ENCODE measurements at regions of chr14 and their contacts with region 1.

Region 1: DNA sequence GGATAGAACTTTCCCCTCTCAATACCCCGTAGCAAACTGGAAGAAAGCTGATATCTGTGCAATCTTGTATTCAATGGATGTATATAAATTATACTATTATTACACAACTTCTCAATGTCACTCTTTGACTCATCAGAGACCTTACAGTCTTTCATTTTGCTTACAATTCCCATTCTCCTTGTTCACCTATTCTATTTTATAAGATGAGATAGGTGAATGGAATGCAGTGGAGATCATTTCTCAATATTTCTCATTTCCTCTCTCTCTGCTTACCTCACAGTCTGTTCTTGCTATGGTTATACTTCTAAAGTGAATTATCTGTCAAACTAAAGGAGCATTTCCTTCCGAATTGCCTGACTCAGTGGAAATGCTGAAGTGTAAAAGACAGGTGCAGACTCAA is 14.9 kb downstream of the FOXA1 start:
- DNase-seq: peak; percentile 83
- H3K4me3 ChIP-seq: no peak overlapping the region
- H3K27ac ChIP-seq: no peak overlapping the region
- H3K4me1 ChIP-seq: peaks cover 17% of the 10 kb centered on the region
- H3K27me3 ChIP-seq: peaks cover 16% of the 10 kb centered on the region
- CTCF ChIP-seq: no peak

Region 2: GRCh38 chr14:37078131-37078530 is 502.0 kb before region 1 on chr14:
- CTCF ChIA-PET with region 1: no interaction called
- dilution Hi-C with region 1: no loop called
- in situ Hi-C with region 1: no loop called
- intact Hi-C with region 1: no loop called
- DNase-seq: no peak
- H3K4me3 ChIP-seq: no peak overlapping the region
- H3K27ac ChIP-seq: no peak overlapping the region
- H3K4me1 ChIP-seq: no peaks in the 10 kb centered on the region
- H3K27me3 ChIP-seq: no peaks in the 10 kb centered on the region
- CTCF ChIP-seq: no peak

Region 3: DNA sequence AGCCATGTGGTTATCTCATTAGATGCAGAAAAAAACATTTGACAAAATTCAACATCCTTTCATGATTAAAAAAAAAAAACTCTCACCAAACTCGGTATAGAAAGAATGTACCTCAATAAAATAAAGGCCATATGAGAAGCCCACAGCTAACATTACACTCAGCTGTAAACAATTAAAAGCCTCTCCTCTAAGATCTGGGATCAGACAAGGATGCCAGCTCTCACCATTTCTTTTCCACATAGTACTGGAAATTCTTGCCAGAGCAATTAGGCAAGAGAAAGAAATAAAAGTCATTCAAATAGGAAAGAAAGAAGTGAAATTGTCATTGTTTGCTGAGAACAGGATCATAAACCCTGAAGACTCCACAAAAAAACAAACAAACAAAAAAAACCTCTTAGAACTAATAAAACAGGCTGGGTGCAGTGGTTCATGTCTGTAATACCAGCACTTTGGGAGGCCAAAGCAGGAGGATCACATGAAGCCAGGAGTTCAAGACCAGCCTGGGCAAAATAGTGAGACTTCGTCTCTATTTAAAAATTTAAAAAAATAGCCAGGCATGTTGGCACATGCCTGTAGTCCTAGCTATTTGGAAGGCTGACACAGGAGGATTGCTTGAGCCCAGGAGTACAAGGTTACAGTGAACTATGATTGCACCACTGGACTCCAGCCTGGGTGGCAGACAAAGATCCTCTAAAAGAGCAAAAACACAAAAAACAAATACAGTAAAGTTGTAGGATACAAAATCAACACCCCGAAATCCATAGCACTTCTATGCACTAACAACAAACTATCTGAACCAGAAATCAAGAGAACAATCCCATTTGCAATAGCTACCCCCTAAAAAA is 99.5 kb before region 1 on chr14:
- CTCF ChIA-PET with region 1: no interaction called
- dilution Hi-C with region 1: no loop called
- in situ Hi-C with region 1: no loop called
- intact Hi-C with region 1: no loop called
- DNase-seq: peak; percentile 2
- H3K4me3 ChIP-seq: no peak overlapping the region
- H3K27ac ChIP-seq: no peak overlapping the region
- H3K4me1 ChIP-seq: no peaks in the 10 kb centered on the region
- H3K27me3 ChIP-seq: no peaks in the 10 kb centered on the region
- CTCF ChIP-seq: no peak

Region 4: GRCh38 chr14:37501877-37502276 is 78.3 kb before region 1 on chr14:
- CTCF ChIA-PET with region 1: no interaction called
- dilution Hi-C with region 1: no loop called
- in situ Hi-C with region 1: no loop called
- intact Hi-C with region 1: no loop called
- DNase-seq: no peak
- H3K4me3 ChIP-seq: no peak overlapping the region
- H3K27ac ChIP-seq: no peak overlapping the region
- H3K4me1 ChIP-seq: no peaks in the 10 kb centered on the region
- H3K27me3 ChIP-seq: no peaks in the 10 kb centered on the region
- CTCF ChIP-seq: no peak

Region 5: DNA sequence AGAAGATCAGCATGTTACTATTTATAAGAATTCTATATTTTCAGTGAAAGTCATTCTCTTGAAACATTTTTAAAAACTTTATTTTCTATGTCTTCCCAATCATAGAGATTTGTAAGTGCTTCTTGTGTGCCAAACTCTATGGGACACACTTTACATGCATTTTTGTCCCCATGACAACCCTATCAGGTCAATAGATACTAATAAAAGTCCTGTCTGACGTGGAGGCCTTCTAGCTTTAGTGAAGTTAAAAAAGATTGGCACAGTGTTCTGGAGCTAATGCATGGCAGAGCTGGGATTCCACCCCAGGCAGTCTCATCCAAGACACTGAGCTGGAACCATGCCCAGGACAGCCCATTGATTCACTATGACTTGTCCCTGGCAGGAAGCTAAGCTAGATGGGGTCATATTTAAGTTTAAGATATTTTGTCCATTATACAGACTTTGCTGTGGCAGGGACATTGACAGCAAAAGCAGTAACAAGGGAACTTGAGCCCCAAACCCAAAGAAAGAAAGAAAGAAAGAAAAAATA is 43.3 kb after region 1 on chr14:
- CTCF ChIA-PET with region 1: no interaction called
- dilution Hi-C with region 1: no loop called
- in situ Hi-C with region 1: no loop called
- intact Hi-C with region 1: loop called (anchors 2 kb)
- DNase-seq: peak; percentile 97
- H3K4me3 ChIP-seq: no peak overlapping the region
- H3K27ac ChIP-seq: peak overlapping the region; percentile 90
- H3K4me1 ChIP-seq: peaks cover 13% of the 10 kb centered on the region
- H3K27me3 ChIP-seq: no peaks in the 10 kb centered on the region
- CTCF ChIP-seq: no peak

Region 6: GRCh38 chr14:37678916-37679315 is 98.8 kb after region 1 on chr14:
- CTCF ChIA-PET with region 1: no interaction called
- dilution Hi-C with region 1: no loop called
- in situ Hi-C with region 1: no loop called
- intact Hi-C with region 1: no loop called
- DNase-seq: peak; percentile 64
- H3K4me3 ChIP-seq: no peak overlapping the region
- H3K27ac ChIP-seq: no peak overlapping the region
- H3K4me1 ChIP-seq: no peaks in the 10 kb centered on the region
- H3K27me3 ChIP-seq: peaks cover 2% of the 10 kb centered on the region
- CTCF ChIP-seq: no peak